Heart left ventricle (tissue), 16 donors: ENCODE measurements at regions of chr9 and their contacts with region 1.

Region 1: DNA sequence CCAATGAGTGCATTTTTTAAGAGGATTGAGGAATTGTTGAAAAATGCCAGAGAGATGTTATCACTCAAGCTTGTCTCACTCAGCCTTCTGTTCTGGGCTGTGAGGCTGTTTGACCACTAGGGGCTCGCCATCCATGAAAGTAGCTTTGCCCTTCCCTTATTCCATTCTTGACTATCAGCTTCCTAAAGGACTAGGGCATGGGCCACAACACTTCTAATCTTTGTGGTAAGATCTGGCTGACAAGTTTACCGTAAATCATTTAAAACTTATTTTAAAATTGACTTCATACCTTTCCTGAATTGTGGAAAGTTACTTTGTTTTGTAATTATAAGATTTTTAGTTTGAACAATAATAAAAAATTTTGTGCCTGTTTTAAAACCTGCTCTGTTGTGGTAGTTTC is 49.5 kb downstream of the TJP2 start:
- DNase-seq: peak in 3 of 5 donors; percentile 30 to 45 (median 41)
- ATAC-seq: peak; percentile 62 to 89 (median 84)
- H3K4me3 ChIP-seq: peak overlapping the region in 1 of 12 donors; percentile 7
- H3K27ac ChIP-seq: peak overlapping the region in 5 of 12 donors; percentile 15 to 43 (median 33)
- H3K4me1 ChIP-seq: peaks cover 0 to 15% (median 3%) of the 10 kb centered on the region in 12 donors
- H3K27me3 ChIP-seq: no peaks in the 10 kb centered on the region
- CTCF ChIP-seq: peak; percentile 48 to 73 (median 60)
- POLR2A ChIP-seq: no peak

Region 2: DNA sequence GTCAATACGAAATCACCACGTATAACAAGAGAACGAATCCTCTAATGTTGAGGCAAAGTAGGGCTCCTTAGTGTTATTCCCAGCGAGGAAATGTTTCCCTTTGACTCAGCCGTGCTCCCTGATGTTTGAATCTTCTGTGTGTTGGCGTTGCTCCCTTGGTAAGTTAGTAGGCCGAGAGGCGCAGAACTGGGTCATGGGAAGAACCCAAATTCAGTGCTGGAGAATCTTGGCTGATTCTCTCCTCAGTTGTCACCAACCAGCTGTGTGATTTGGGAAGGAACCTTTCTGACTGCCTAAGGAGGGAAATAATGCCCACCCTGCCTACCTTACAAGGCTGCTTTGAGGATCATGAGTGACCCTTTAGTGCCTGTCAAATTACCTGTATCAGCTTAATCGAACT is 232.1 kb before region 1 on chr9:
- intact Hi-C with region 1: no loop called
- DNase-seq: no peak
- ATAC-seq: no peak
- H3K4me3 ChIP-seq: no peak overlapping the region
- H3K27ac ChIP-seq: no peak overlapping the region
- H3K4me1 ChIP-seq: peaks cover 0 to 10% (median 0%) of the 10 kb centered on the region in 12 donors
- H3K27me3 ChIP-seq: no peaks in the 10 kb centered on the region
- CTCF ChIP-seq: no peak
- POLR2A ChIP-seq: no peak

Region 3: GRCh38 chr9:69307446-69308216 is 84.0 kb after region 1 on chr9:
- intact Hi-C with region 1: loop called in 1 of 10 experiments (anchors 10 kb)
- DNase-seq: no peak
- ATAC-seq: peak in 3 of 4 donors; percentile 53 to 60 (median 55)
- H3K4me3 ChIP-seq: no peak overlapping the region
- H3K27ac ChIP-seq: peak overlapping the region in 11 of 12 donors; percentile 5 to 86 (median 62)
- H3K4me1 ChIP-seq: peaks cover 0 to 15% (median 4%) of the 10 kb centered on the region in 12 donors
- H3K27me3 ChIP-seq: no peaks in the 10 kb centered on the region
- CTCF ChIP-seq: peak in 4 of 12 donors; percentile 7 to 28 (median 12)
- POLR2A ChIP-seq: no peak

Region 4: GRCh38 chr9:69376651-69377050 is 153.0 kb after region 1 on chr9:
- intact Hi-C with region 1: loop called in 3 of 10 experiments (anchors 5 to 10 kb)
- DNase-seq: peak in 4 of 5 donors; percentile 44 to 71 (median 52)
- ATAC-seq: peak; percentile 81 to 91 (median 84)
- H3K4me3 ChIP-seq: no peak overlapping the region
- H3K27ac ChIP-seq: peak overlapping the region in 11 of 12 donors; percentile 19 to 88 (median 46)
- H3K4me1 ChIP-seq: peaks cover 0 to 63% (median 37%) of the 10 kb centered on the region in 12 donors
- H3K27me3 ChIP-seq: no peaks in the 10 kb centered on the region
- CTCF ChIP-seq: no peak
- POLR2A ChIP-seq: no peak

Region 5: DNA sequence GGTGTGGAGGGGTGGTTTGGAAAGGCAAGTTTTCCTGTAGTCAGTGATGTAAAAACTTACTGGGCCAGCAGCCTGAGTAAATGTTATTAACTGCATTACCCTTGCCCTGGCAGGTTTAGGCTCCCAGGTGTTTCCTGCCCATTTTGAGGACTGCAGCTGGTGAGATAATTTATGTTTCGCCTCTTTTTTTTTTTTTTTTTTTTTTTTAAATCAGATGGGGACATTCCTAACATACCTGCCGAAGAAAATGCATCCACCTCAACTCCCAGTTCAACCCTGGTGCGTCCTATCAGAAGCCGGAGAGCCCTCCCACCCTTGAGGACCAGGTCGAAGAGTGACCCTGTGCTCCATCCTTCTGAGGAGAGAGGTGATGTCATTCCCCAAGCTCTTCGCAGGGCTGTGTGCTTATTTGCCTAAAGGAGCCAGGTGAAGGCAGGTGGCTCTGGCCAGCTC is 162.0 kb after region 1 on chr9:
- intact Hi-C with region 1: loop called in 3 of 10 experiments (anchors 5 to 10 kb)
- DNase-seq: no peak
- ATAC-seq: no peak
- H3K4me3 ChIP-seq: no peak overlapping the region
- H3K27ac ChIP-seq: peak overlapping the region in 1 of 12 donors; percentile 67
- H3K4me1 ChIP-seq: peaks cover 0 to 26% (median 9%) of the 10 kb centered on the region in 12 donors
- H3K27me3 ChIP-seq: no peaks in the 10 kb centered on the region
- CTCF ChIP-seq: no peak
- POLR2A ChIP-seq: no peak